Mammary epithelial cell (primary cell): ENCODE measurements at regions of chr2 and their contacts with region 1.

Region 1: GRCh38 chr2:3604991-3605961 is 10.4 kb downstream of the COLEC11 start:
- DNase-seq: no peak
- H3K4me3 ChIP-seq: no peak overlapping the region
- H3K27ac ChIP-seq: no peak overlapping the region
- H3K4me1 ChIP-seq: no peaks in the 10 kb centered on the region
- H3K27me3 ChIP-seq: no peaks in the 10 kb centered on the region
- CTCF ChIP-seq: no peak

Region 2: GRCh38 chr2:3536682-3537632 is 68.3 kb before region 1 on chr2:
- CTCF ChIA-PET with region 1: no interaction called
- dilution Hi-C with region 1: loop called (anchors 5 kb)
- in situ Hi-C with region 1: no loop called
- intact Hi-C with region 1: no loop called
- DNase-seq: peak; percentile 8
- H3K4me3 ChIP-seq: no peak overlapping the region
- H3K27ac ChIP-seq: peak overlapping the region; percentile 89
- H3K4me1 ChIP-seq: peaks cover 21% of the 10 kb centered on the region
- H3K27me3 ChIP-seq: no peaks in the 10 kb centered on the region
- CTCF ChIP-seq: peak; percentile 26 to 31